Posterior cingulate gyrus (tissue), 11 donors: ENCODE measurements at regions of chr3 and their contacts with region 1.

Region 1: GRCh38 chr3:76570436-76571057 is 469.4 kb upstream of the ROBO2 start:
- DNase-seq: no peak

Region 2: DNA sequence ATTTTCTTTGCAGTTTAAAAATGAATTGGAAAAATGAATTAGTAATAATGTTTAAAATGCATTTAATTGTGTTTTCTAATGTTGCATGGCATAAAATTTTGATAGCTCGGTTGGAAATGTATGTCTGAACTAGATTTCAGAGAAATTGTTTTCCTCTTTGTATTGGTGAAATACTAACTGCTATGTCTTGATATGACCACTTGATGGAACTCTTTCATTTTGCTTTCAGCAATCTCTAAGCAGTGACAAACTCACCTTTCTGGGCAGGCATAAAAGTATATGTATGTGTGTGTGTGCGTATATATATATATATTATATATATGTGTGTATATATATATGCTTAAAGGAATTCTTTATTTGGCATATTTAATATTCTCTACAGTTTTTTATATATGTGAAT is 545.9 kb before region 1 on chr3:
- intact Hi-C with region 1: loop called (anchors 10 kb)
- DNase-seq: no peak

Region 3: DNA sequence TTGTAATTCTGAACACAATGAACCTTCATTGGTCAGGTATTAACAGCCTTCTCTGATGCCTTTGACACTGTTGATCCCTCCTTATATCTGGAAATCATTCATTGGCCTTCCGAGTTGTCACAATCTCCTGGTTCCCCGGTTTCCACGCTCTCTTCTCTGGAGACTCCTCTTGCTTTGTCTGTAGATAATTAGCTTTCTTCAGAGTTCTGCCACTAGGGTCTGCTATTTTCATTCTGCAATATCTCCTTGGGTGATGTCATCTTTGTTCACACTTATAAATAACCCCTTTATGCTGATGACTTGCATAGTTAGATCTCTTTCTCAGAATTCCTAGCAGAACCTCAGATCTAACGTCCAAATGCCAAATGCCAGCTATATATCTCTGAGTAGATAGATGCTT is 201.4 kb before region 1 on chr3:
- intact Hi-C with region 1: loop called (anchors 2 kb)
- DNase-seq: no peak

Region 4: DNA sequence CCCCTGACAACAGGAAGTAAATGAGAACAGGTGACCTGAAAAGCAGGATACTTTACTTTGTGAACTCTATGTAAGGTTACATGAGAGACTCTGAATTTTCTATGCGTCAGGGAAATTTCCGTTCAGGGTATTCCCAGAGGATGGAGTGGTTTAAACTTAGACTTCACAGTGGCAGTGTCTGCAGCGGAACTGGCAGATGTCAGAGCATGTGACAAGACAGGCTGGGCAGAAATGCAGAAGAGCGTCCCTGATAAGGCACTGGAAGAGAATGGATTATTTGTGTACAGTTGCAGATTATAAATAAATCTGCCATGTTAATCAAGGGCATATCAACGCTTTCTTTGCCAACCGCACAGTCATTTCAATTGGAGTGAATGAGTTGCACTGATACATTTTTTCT is 186.8 kb before region 1 on chr3:
- intact Hi-C with region 1: no loop called
- DNase-seq: peak in 6 of 10 donors; percentile 8 to 78 (median 26)